Left ventricle myocardium superior (tissue), 1 donor: ENCODE measurements at regions of chr3 and their contacts with region 1.

Region 1: GRCh38 chr3:149657926-149658733 is at the start of gene WWTR1:
- DNase-seq: peak; percentile 95
- ATAC-seq: peak; percentile 92
- total RNA-seq, gene WWTR1: 40.0 TPM

Region 2: GRCh38 chr3:149129326-149130205 is 528.6 kb before region 1 on chr3 and contains the start of gene HPS3:
- intact Hi-C with region 1: no loop called
- DNase-seq: peak; percentile 97
- ATAC-seq: peak; percentile 100
- total RNA-seq, gene HPS3: 5.8 TPM

Region 3: DNA sequence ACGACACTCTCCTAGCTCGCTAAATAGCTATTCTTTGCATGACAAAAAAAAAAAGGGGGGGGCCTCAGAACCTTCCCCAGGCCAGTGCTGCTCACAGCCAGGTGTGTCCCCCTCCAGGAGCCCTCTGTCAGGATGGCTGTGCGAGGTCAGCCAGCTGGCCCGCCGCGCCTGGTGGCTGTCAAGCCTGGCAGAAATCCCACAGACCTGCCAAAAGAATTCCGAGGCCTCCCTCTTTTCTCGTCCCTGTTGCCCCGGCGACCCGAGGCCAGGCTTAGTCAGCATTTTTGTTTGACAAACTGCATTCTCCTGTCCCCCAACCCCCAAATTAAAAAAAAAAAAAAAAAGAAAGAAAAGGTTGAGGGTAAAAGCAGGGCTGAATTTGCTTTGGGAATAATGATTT is 121.7 kb before region 1 on chr3:
- intact Hi-C with region 1: loop called (anchors 10 kb)
- DNase-seq: peak; percentile 87
- ATAC-seq: peak; percentile 92

Region 4: DNA sequence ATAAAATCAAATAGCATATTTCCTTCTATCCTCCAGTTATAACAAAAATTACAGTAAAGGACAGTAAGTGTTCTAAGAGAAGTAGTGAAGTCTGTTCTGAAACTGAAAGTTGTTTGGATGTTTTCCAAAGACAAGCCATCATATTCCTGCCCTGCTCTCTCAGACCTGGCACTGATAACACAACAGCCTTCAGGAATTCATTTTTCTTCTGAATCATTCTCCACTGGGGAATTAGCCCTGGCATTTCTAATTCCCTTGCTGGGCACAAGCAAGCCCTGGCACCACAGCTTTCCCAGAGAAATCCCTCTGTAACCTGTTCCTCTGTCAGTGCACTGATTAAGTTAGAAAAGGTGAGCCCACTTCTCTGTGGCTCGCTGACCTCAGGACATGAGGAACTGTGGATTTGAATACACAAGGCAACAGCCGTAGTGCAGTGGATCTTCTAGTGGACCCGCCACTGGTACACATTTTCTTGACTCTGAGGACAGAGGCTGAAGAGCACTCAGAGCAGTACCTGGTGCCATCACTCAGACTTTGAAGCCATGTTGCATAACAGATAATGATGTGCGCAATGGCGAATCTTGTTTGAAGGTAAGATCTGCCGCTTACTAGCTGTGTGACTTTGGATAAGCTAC is 61.9 kb before region 1 on chr3:
- intact Hi-C with region 1: loop called (anchors 10 kb)
- DNase-seq: no peak
- ATAC-seq: no peak

Region 5: DNA sequence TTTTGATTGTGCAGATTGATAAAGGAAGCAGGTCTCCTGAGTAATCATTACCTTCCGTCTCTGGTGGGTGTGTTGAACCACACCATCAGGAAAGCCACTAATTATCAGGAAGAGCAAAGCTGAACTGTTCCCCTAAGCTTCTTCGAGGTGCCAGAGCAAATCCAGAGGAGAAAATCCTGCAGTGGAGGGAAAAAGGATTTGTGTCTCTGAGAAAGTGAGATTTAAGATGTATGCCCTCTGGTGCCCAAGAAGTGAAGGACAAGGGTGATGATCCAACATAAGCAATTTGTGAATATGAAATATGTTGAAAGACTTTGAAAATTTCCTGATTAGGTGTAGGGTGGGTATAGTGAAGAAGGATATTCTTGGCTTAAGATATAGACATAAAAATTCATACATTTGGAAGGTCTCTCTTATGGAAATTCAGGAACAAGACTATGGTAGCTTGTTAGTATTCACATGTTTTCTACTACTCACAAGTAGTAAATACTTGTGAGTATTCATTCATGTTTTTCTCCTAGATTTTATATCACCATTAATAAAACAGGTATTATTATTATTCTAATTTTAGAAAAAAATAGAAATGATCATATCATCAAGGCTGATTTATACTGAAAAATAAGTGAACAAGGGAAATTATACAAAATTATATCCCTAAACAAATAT is 59.4 kb after region 1 on chr3:
- intact Hi-C with region 1: loop called (anchors 10 kb)
- DNase-seq: no peak
- ATAC-seq: peak; percentile 52

Region 6: GRCh38 chr3:149820180-149820579 is 162.1 kb after region 1 on chr3:
- intact Hi-C with region 1: no loop called
- DNase-seq: no peak
- ATAC-seq: no peak